Ascending aorta (tissue), 2 donors: ENCODE measurements at regions of chr9 and their contacts with region 1.

Region 1: DNA sequence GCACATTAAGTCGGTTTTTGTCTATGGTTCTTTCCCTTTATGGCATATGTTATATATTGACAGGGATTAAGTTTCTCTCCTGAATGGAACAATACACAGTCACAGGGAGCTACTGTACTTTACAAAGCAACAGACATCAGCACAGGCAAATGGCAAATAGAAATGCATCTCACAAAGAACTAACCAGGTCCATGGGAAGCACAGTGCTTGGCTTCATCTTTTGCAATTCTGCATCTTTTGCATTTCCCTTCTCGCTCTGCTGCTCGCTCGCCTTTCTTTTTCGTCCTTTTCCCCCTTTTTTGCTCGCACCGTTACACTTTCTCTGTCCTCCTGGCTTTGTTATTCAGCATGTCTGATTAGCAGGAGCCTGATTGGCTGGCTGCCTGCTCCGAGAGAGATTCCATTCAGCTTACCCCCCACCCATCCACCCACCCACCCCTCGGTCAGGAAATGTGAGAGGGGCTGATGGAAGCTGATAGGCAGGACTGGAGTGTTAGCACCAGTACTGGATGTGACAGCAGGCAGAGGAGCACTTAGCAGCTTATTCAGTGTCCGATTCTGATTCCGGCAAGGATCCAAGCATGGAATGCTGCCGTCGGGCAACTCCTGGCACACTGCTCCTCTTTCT is at the start of gene ADAMTSL1:
- DNase-seq: no peak
- H3K4me3 ChIP-seq: peak within 1 kb of the TSS; percentile 57 to 64
- H3K27ac ChIP-seq: peak within 1 kb of the TSS; percentile 72 to 81
- H3K4me1 ChIP-seq: peaks cover 0 to 35% of the 10 kb centered on the region in 2 donors
- H3K27me3 ChIP-seq: no peaks in the 10 kb centered on the region
- CTCF ChIP-seq: no peak
- total RNA-seq, gene ADAMTSL1: 12.3 TPM

Region 2: DNA sequence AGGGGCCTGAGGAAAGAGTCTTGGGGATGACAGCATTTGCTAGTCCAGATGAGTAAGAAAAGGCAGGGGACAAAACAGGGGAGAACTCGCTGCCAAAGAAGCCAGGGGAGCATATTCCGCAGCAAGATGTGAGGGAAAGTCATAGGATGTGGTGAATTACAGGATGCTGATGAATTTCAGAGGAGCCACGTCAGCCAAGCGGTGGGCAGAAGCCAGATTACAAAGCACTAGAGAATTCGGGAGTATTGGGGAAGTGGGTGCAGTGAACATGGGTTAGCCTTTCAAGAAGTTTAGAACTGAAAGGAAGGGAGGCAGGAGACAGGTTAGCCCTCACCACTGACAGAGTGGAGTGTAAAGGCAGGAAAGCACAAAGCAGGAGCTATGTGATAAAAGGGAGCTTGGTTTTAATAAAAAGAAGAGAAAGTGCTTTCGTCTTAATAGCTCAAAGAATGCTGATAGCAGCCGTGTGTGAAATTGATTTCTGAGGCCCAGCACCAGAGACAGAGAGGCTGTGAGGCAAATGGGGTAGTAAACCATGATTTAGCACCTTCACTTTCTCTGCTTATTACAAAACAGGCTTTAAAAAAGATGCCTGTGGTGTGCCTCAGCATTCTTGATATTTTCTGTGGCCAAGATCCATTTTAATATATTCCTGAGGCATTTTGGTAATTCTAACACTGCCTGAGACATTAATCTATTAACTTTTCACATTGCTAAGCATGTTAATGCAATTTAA is 17.0 kb after region 1 on chr9:
- intact Hi-C with region 1: loop called (anchors 2 kb)
- DNase-seq: peak; percentile 47 to 91
- H3K4me3 ChIP-seq: peak overlapping the region; percentile 24 to 48
- H3K27ac ChIP-seq: peak overlapping the region; percentile 83 to 88
- H3K4me1 ChIP-seq: peaks cover 3 to 36% of the 10 kb centered on the region in 2 donors
- H3K27me3 ChIP-seq: no peaks in the 10 kb centered on the region
- CTCF ChIP-seq: no peak

Region 3: GRCh38 chr9:18566121-18566520 is 92.4 kb after region 1 on chr9:
- intact Hi-C with region 1: loop called (anchors 10 kb)
- DNase-seq: no peak
- H3K4me3 ChIP-seq: no peak overlapping the region
- H3K27ac ChIP-seq: peak overlapping the region; percentile 2 to 66
- H3K4me1 ChIP-seq: peaks cover 0 to 14% of the 10 kb centered on the region in 2 donors
- H3K27me3 ChIP-seq: no peaks in the 10 kb centered on the region
- CTCF ChIP-seq: no peak

Region 4: DNA sequence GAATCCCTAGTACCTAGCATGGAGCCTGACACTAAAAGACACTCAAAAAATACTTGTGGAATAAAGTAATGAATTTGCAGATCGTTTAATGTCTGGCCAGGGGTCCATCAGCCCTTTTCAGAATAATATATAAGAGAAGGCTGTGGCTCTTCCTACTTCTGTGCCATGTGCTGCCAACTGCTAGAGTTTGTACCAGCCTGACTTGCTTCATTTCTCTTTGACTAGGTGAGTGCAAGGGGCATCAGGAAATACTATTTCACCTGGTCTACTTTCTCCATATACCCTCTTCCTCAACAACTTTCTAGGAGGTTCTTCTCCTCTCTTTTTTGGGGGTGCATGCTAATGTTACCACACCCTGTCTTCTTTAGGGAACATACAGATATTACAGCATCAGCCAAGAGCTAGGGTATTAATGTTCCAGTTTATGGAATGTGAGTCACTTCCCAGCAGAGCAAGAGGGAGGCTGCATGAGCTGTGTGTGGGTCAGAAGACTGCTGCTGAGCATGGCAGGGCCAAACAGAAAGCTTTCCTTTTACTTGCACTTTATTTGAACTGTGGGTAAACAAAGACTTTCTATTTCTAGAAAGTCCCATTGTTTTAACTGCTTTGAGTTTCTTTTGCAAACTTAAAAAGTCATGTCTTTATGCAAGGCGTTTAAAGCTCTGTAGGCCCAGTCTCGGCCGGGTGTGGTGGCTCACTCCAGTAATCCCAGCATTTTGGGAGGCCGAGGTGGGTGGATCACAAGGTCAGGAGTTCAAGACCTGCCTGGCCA is 159.1 kb after region 1 on chr9:
- intact Hi-C with region 1: loop called (anchors 5 kb)
- DNase-seq: peak; percentile 31 to 82
- H3K4me3 ChIP-seq: no peak overlapping the region
- H3K27ac ChIP-seq: peak overlapping the region; percentile 78 to 79
- H3K4me1 ChIP-seq: peaks cover 0 to 29% of the 10 kb centered on the region in 2 donors
- H3K27me3 ChIP-seq: no peaks in the 10 kb centered on the region
- CTCF ChIP-seq: no peak